Right ventricle myocardium inferior (tissue), 1 donor: ENCODE measurements at regions of chr17 and their contacts with region 1.

Region 1: DNA sequence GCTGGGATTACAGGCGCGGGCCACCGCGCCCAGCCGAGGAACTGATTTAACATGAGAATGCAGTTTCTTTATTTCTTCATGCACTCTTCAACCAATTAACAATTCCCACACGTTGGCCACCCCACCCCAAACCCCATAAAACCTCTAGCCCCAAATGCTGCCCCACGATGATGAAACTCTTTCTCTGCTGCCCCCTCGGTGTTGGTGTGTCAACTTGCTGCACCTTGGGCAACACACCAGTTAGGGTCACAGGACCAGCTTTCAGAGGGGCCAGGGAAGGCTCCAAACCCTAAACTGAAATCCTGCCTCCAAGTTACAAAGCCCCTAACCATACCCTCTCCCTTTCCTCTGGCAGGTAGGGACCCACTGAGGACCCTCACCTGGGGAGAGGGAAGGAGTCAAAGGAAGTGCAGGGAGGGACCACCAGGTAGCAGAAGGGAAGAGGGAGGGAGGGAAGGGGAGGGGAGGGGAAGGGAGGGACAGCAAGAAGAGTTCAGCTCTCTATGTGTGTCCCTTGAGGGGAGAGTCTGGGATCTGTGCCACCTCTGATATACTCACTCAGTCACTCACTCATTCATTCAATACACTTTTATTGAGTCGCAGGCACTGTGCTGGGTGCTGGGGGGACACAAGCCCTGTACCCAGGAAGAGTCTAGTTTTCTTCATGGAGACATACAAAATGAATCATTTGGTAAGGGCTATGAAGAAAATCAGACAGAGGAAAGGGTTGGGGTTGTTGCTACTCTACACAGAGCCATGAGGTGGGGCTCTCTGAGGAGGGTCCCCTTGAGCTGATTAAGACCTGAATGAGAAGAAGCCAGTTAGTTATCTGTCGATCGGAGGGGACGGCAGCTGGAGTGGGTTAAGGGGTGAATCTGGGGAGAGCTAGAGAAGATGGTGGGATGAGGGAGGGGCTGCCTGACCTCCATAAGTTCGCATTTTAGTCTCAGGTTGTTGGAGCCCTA is 3.9 kb downstream of the PLXDC1 start:
- DNase-seq: no peak
- ATAC-seq: no peak

Region 2: GRCh38 chr17:39018267-39019134 is 129.0 kb before region 1 on chr17:
- intact Hi-C with region 1: no loop called
- DNase-seq: no peak
- ATAC-seq: no peak

Region 3: DNA sequence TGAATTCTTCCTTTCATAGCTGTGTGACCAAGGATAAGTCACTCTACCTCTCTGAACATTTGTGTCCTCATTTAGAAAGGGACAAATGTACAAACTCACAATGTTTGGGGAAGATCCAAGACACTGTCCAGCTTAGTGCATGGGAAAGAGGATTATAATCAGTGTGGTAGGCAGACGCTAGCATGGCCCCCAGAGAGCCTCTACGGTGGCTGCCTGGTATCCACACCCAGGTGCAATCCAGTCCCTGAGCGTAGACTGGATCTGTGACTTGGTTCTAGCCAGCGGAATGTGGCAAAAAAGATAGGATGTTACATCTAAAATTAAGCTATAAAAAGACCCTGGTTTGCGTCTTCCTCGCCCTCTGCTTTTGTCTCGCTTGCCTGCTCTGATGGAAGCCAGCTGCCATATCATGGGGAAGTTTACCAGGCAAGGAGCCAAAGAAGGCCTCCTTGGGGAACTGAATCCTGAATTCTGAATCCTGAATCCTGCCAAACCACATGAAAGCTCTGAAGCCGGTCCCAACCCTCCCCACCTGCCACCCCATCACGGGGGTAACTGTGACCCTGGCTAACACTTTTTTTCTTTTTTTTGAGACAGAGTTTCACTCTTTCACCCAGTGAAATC is 47.7 kb before region 1 on chr17:
- intact Hi-C with region 1: loop called (anchors 5 kb)
- DNase-seq: no peak
- ATAC-seq: peak; percentile 60